ENCODE measurements at regions of chr6 and their contacts with region 1.

Region 1: DNA sequence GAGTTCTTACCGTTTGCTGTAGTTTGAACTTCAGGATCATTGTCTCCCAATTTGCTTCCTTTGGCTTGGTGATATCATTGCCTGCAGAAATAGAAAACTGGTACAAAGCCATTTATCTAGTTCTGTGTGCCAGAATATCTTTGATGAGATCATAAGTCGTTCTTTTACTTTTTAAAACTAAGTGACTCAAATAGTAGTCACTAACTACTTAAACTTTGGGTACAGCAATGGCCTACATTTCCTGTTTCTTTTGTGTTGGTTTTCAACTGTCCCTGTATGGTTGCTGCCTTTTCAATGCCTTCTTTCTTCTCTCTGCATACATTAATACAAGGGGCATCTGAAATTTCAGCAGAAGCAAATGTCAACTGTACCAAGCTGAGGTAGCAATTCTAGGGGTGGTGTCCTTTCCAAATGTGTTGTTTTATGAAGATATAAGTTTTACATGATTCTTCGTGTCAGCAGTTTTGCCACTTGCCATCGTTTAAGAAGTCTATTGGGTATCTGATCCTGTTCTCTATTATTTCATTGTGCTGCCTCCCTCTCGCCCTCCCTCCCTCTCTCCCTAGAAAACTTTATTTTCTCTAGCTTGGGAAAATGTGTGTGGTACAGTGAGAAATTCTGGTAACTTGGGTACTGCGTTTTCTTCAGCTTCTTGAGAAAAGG is 238.5 kb downstream of the FARS2 start:
- DNase-seq: no peak
- ATAC-seq: peak; percentile 67
- H3K4me3 Mint-ChIP-seq: no peak overlapping the region
- H3K27ac Mint-ChIP-seq: peak overlapping the region; percentile 62
- H3K4me1 Mint-ChIP-seq: peaks cover 21% of the 10 kb centered on the region
- H3K27me3 Mint-ChIP-seq: no peaks in the 10 kb centered on the region
- CTCF ChIP-seq: no peak

Region 2: DNA sequence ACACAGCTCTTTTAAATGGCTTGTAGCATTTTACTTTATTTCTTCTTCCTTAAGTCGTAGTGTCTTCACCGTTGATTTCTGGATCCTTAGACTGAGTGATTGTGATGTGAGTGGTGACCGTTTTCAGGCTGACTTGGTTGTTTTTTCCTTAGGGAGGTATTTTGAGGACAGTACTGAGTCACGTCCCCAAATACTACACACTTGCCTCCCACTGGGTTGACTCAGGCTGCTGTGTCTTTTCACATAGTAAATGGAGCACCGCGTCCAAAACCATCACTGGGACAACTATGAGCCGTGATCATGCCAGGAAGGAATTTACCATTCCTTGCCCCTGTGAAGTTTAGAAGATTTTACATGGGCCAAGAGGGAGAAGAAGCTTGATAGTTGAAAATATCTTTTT is 64.3 kb before region 1 on chr6:
- CTCF ChIA-PET with region 1: no interaction called
- POLR2A ChIA-PET with region 1: no interaction called
- intact Hi-C with region 1: no loop called
- DNase-seq: no peak
- ATAC-seq: no peak
- H3K4me3 Mint-ChIP-seq: no peak overlapping the region
- H3K27ac Mint-ChIP-seq: no peak overlapping the region
- H3K4me1 Mint-ChIP-seq: peaks cover 7% of the 10 kb centered on the region
- H3K27me3 Mint-ChIP-seq: no peaks in the 10 kb centered on the region
- CTCF ChIP-seq: no peak

Region 3: DNA sequence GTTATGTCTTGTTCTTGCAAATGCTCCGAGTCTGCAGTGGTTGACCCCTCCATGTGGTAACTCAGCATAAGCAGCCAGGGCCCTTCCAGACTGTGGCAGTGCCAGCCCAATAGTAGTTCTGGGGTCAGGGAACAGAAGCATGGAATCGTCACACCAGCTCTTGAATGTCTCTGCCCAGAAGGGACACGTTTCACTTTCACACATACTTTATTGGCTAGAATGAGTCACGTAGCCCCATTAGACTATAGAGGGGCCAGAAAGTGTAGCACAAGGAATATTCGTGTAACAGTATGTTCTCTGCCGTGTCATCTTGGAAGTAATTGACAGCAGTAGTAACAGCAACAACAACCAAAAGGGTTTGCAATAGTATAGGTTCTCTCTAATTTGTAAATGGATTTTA is 16.3 kb after region 1 on chr6:
- CTCF ChIA-PET with region 1: no interaction called
- POLR2A ChIA-PET with region 1: no interaction called
- intact Hi-C with region 1: no loop called
- DNase-seq: peak; percentile 33
- ATAC-seq: peak; percentile 38
- H3K4me3 Mint-ChIP-seq: no peak overlapping the region
- H3K27ac Mint-ChIP-seq: peak overlapping the region; percentile 71
- H3K4me1 Mint-ChIP-seq: peaks cover 50% of the 10 kb centered on the region
- H3K27me3 Mint-ChIP-seq: no peaks in the 10 kb centered on the region
- CTCF ChIP-seq: no peak

Region 4: GRCh38 chr6:5529733-5530132 is 30.0 kb after region 1 on chr6:
- CTCF ChIA-PET with region 1: no interaction called
- POLR2A ChIA-PET with region 1: no interaction called
- intact Hi-C with region 1: loop called (anchors 2 kb)
- DNase-seq: no peak
- ATAC-seq: no peak
- H3K4me3 Mint-ChIP-seq: no peak overlapping the region
- H3K27ac Mint-ChIP-seq: no peak overlapping the region
- H3K4me1 Mint-ChIP-seq: peaks cover 5% of the 10 kb centered on the region
- H3K27me3 Mint-ChIP-seq: no peaks in the 10 kb centered on the region
- CTCF ChIP-seq: no peak

Measured in activated CD8-positive, alpha-beta T cell treated with anti-CD3 and anti-CD28 coated beads for 36 hours (primary cell).